Activated CD8-positive, alpha-beta T cell treated with anti-CD3 and anti-CD28 coated beads, Interleukin-2, amount 10 ng/mL, durations not matched to agents 7 days and 5 days (primary cell): ENCODE measurements at regions of chr1 and their contacts with region 1.

Region 1: DNA sequence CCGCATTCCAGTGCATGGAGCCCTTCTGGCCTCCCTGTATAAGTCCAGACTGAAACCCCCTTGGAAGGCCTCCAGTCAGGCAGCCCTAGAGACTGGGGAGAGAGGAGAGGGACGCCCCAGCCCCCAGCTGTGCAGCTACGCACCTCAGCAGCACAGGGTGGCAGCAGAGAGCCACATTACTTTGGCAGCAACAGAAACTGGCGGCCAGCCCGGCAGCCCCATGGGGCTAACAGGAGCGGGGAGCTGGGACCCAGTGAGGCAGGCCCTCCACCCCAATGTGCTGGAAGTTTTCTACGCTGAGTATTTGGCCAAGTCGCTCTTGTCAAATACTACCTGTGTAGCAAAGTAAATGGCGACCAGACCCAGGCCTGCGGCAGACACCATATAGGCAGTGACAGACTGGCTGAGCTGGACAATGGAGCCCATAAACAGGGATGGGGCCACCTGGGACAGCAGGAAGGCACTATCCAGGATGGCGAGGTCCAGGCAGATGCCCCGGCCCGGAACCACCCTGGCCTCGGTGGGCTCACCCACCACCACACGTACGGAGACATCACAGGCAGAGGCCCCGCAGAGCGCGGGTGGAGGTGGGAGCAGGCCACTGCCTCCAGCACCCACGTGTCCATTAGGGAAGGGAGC is 21.2 kb downstream of the SLC45A3 start:
- DNase-seq: peak; percentile 82
- ATAC-seq: peak; percentile 93
- H3K4me3 Mint-ChIP-seq: no peak overlapping the region
- H3K27ac Mint-ChIP-seq: no peak overlapping the region
- H3K4me1 Mint-ChIP-seq: no peaks in the 10 kb centered on the region
- H3K27me3 Mint-ChIP-seq: peaks cover 5% of the 10 kb centered on the region

Region 2: DNA sequence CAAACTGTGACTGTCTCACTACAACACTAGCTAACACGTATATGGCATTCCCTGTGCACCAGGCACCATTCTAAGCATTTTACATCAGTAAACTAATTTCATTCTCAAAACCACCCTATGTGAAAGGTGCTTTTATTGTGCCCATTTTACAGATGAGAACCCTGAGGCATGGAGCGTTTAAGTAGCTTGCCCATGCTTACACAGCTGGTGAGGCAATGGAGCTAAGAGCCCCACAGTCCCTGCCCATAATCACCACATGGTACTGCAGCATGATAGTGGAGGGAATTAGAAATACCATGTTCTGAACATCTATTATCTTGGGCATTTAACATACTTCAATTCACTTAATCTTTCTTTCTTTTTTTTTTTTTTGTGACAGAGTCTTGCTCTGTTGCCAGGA is 271.2 kb before region 1 on chr1:
- CTCF ChIA-PET with region 1: no interaction called
- POLR2A ChIA-PET with region 1: no interaction called
- DNase-seq: no peak
- ATAC-seq: no peak
- H3K4me3 Mint-ChIP-seq: no peak overlapping the region
- H3K27ac Mint-ChIP-seq: no peak overlapping the region
- H3K4me1 Mint-ChIP-seq: no peaks in the 10 kb centered on the region
- H3K27me3 Mint-ChIP-seq: peaks cover 8% of the 10 kb centered on the region

Region 3: DNA sequence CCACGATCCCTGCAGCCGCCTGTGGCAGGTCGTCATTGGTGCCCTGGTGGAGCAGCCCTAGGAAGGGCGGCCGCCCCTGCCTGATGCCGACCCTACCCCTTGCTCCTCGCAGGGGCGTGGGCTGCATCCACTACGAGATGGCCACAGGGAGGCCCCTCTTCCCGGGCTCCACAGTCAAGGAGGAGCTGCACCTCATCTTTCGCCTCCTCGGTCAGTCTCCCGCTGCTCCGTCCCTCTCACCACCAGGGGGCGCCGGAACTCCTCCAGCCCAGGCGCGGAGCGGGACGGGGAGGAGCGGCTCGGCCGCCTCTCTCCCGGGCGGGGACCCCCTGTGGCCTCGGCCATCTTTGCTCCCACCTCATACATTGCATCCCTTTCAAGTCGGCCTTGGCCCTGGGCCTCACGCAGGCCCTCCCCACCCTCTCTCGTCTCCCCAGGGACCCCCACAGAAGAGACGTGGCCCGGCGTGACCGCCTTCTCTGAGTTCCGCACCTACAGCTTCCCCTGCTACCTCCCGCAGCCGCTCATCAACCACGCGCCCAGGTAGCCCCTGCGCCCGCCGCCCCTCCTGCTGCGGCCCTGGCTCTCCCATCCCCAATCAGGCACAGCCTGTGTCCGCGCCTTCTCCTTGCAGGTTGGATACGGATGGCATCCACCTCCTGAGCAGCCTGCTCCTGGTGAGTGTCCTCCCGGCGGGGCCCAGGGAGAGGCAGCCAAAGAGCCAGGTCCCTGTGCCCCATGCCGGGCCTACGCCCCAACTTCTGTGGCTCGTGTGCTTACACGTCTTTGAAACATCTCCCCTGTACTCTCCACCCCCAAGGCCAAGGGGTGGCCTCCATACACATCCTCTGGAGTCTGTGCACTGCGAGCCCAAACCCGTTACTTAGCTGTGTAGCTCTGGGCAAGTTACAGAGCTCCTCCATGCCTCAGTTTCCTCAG is 129.9 kb before region 1 on chr1:
- CTCF ChIA-PET with region 1: interaction called, 104 read pairs
- POLR2A ChIA-PET with region 1: no interaction called
- DNase-seq: peak; percentile 87
- ATAC-seq: peak; percentile 95
- H3K4me3 Mint-ChIP-seq: peak overlapping the region; percentile 43
- H3K27ac Mint-ChIP-seq: no peak overlapping the region
- H3K4me1 Mint-ChIP-seq: peaks cover 4% of the 10 kb centered on the region
- H3K27me3 Mint-ChIP-seq: no peaks in the 10 kb centered on the region

Region 4: DNA sequence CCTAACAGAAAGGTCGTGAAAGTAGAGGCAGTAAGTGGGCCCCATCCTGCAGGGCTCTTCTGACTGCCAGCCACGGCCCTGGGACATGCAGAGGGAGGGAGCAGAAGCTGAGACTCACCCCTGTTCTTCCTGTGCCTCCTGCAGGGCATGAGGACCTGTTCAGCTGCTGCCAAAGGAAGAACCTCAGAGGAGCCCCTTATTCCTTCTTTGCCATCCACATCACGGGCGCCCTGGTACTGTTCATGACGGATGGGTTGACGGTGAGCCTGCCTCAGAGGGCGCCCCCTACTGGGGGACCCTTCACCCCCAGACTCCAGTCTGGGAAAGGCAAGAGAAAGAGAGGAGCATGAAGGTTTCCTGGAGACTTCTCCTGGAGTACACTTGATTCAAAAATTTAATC is 74.3 kb before region 1 on chr1:
- CTCF ChIA-PET with region 1: interaction called, 444 read pairs
- POLR2A ChIA-PET with region 1: interaction called, 3 read pairs
- DNase-seq: no peak
- ATAC-seq: no peak
- H3K4me3 Mint-ChIP-seq: no peak overlapping the region
- H3K27ac Mint-ChIP-seq: no peak overlapping the region
- H3K4me1 Mint-ChIP-seq: peaks cover 18% of the 10 kb centered on the region
- H3K27me3 Mint-ChIP-seq: peaks cover under 1% of the 10 kb centered on the region

Region 5: DNA sequence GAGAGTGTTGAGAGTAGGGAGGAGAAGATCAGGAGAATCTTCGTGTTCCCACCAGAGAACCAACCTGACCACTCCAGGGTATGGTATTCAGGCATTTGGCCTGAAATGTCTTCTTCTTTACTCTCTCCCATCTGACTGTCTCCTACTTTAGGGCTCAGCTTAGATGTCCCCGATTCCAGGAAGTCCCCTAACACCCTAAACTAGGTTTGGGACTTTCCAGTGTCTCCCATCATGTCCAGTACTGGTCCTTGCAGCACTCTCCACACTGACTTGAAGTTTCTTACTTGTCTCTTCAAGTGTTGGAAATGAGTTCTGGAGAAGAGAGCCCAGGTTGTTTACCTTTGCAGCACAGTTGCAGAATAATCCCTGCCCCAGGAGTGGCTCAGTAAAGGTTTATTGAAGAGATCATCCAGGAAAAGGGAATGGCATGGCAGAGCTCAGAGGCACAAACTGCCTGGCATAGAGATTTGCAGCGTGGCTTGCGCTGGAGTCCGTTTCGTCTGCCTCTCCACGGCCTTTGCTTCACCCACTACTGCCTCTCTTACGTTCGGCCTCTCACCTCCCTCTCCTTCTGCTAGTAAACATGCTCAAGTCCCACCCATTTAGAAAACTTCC is 21.1 kb before region 1 on chr1:
- CTCF ChIA-PET with region 1: interaction called, 138 read pairs
- POLR2A ChIA-PET with region 1: interaction called, 10 read pairs
- DNase-seq: no peak
- ATAC-seq: no peak
- H3K4me3 Mint-ChIP-seq: no peak overlapping the region
- H3K27ac Mint-ChIP-seq: no peak overlapping the region
- H3K4me1 Mint-ChIP-seq: peaks cover 7% of the 10 kb centered on the region
- H3K27me3 Mint-ChIP-seq: peaks cover 21% of the 10 kb centered on the region

Region 6: GRCh38 chr1:205700865-205701401 is 41.9 kb after region 1 on chr1:
- CTCF ChIA-PET with region 1: interaction called, 37 read pairs
- POLR2A ChIA-PET with region 1: no interaction called
- DNase-seq: no peak
- ATAC-seq: no peak
- H3K4me3 Mint-ChIP-seq: no peak overlapping the region
- H3K27ac Mint-ChIP-seq: no peak overlapping the region
- H3K4me1 Mint-ChIP-seq: peaks cover 8% of the 10 kb centered on the region
- H3K27me3 Mint-ChIP-seq: no peaks in the 10 kb centered on the region

Region 7: DNA sequence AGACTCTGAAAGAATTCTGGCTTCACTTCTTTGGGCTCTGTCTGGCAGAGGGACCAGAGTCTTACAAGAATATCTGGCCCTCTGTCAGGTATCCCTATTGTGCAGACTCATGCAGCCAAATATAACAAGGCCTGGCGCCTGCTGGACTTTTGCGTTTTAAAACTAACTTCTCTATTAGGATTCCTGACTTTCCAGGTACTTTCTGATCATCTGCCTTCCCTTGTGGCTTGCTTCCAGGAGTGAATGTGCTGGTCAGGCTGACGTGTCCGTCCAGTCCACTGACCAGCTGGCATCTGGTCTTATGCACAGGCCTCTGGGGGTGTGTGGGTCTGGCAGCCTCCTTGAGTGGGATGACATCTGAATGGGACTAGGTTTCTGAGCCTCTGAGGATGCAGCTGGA is 124.8 kb after region 1 on chr1:
- CTCF ChIA-PET with region 1: interaction called, 111 read pairs
- POLR2A ChIA-PET with region 1: no interaction called
- DNase-seq: no peak
- ATAC-seq: no peak
- H3K4me3 Mint-ChIP-seq: no peak overlapping the region
- H3K27ac Mint-ChIP-seq: no peak overlapping the region
- H3K4me1 Mint-ChIP-seq: peaks cover 16% of the 10 kb centered on the region
- H3K27me3 Mint-ChIP-seq: no peaks in the 10 kb centered on the region

Region 8: DNA sequence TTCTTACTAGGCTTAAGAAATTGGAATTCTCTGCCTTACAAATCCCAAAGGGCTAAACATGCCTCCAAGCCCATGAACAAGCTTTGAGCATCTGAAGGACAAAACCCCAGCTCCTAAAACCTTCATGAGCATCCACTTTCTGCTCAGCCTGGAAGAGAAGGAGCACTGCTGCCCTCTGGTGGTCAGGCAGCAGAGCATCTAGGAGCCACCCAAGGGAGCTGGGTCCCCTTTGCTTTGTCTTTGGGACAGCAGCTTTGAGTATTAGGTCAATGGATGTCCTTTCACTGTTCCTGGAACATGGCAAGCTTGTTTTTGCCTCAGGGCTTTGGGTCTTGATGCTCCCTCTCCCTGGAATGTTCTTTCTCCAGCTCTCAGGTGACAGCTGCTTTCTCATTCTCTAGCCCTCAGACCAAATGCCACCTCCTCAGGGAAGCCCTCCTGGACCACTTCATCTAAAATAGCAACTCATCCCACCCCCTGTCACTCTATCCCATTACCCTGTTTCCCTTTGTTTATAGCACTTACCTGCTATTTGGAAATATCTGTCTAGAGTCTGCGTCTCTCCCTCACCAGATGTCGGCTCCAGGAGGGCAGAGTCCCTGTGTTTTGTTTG is 318.4 kb after region 1 on chr1:
- CTCF ChIA-PET with region 1: interaction called, 115 read pairs
- POLR2A ChIA-PET with region 1: interaction called, 4 read pairs
- DNase-seq: peak; percentile 81
- ATAC-seq: peak; percentile 85
- H3K4me3 Mint-ChIP-seq: no peak overlapping the region
- H3K27ac Mint-ChIP-seq: no peak overlapping the region
- H3K4me1 Mint-ChIP-seq: no peaks in the 10 kb centered on the region
- H3K27me3 Mint-ChIP-seq: peaks cover 5% of the 10 kb centered on the region